GM12878 (cell line): ENCODE measurements at regions of chr9 and their contacts with region 1.

Region 1: DNA sequence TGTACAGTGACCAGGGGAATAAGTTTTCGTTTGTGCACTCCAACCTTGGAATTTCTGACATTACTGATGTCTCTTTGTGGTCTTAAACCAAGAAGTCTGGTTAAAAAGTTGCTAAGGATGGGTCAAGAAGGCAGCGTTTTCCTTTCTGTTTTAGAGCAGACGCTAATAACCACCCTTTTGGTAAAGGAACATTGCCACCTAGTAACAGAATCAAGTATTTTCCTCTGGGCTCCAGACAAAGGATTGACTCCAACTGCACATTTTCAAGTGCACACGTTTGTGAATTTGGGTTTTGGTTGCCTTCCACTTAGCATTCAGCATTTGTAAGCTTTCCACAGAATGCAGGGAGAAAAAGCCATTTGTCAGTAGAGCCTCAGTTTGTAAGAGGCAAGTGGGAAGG is 22.2 kb upstream of the CEP78 start:
- DNase-seq: no peak
- ATAC-seq: peak; percentile 70
- H3K4me3 ChIP-seq: no peak overlapping the region
- H3K27ac ChIP-seq: no peak overlapping the region
- H3K4me1 ChIP-seq: peaks cover 13% of the 10 kb centered on the region
- H3K27me3 ChIP-seq: no peaks in the 10 kb centered on the region
- CTCF ChIP-seq: peak; percentile 25 to 52 (median 40); a peak in 5 of 6 replicates
- EP300 ChIP-seq: no peak
- POLR2A ChIP-seq: no peak
- RAD21 ChIP-seq: peak; percentile 58

Region 2: GRCh38 chr9:78004478-78005229 is 209.1 kb before region 1 on chr9:
- CTCF ChIA-PET with region 1: no interaction called
- POLR2A ChIA-PET with region 1: no interaction called
- RAD21 ChIA-PET with region 1: no interaction called
- SMC1A ChIA-PET with region 1: no interaction called
- in situ Hi-C with region 1: no loop called
- intact Hi-C with region 1: loop called (anchors 10 kb)
- DNase-seq: no peak
- ATAC-seq: peak; percentile 44
- H3K4me3 ChIP-seq: no peak overlapping the region
- H3K27ac ChIP-seq: no peak overlapping the region
- H3K4me1 ChIP-seq: no peaks in the 10 kb centered on the region
- H3K27me3 ChIP-seq: no peaks in the 10 kb centered on the region; a peak in 2 of 4 replicates
- CTCF ChIP-seq: peak; percentile 3 to 25 (median 6); a peak in 3 of 6 replicates
- EP300 ChIP-seq: no peak
- POLR2A ChIP-seq: no peak
- RAD21 ChIP-seq: no peak

Region 3: DNA sequence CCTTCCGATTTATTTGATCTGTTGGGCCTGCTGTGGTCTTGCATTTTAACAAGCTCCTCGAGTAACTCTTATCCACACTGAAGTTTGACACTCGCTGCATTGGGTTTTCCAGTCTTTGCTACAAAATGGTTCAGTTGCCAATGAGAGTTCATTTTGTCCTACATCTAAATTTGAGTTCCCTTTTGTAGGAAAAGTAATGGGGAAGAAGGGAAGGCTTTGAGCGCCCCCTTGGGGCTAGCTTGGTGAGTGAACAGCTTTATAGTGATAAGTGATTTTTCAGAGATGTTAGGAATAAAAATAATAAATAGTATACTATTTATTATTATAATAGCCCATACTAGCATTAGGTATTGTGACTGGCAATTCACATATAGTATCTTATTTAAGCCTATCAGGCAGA is 92.2 kb before region 1 on chr9:
- CTCF ChIA-PET with region 1: interaction called, 5 read pairs
- POLR2A ChIA-PET with region 1: no interaction called
- RAD21 ChIA-PET with region 1: interaction called, 4 read pairs
- SMC1A ChIA-PET with region 1: interaction called, 12 read pairs
- in situ Hi-C with region 1: no loop called
- intact Hi-C with region 1: loop called (anchors 5 kb)
- DNase-seq: no peak
- ATAC-seq: peak; percentile 22; the same call in 1 of the 3 replicates
- H3K4me3 ChIP-seq: no peak overlapping the region
- H3K27ac ChIP-seq: no peak overlapping the region
- H3K4me1 ChIP-seq: peaks cover 7% of the 10 kb centered on the region; the same call in 1 of the 2 replicates
- H3K27me3 ChIP-seq: no peaks in the 10 kb centered on the region
- CTCF ChIP-seq: peak; percentile 49 to 57 (median 53)
- EP300 ChIP-seq: no peak
- POLR2A ChIP-seq: no peak
- RAD21 ChIP-seq: peak; percentile 70

Region 4: DNA sequence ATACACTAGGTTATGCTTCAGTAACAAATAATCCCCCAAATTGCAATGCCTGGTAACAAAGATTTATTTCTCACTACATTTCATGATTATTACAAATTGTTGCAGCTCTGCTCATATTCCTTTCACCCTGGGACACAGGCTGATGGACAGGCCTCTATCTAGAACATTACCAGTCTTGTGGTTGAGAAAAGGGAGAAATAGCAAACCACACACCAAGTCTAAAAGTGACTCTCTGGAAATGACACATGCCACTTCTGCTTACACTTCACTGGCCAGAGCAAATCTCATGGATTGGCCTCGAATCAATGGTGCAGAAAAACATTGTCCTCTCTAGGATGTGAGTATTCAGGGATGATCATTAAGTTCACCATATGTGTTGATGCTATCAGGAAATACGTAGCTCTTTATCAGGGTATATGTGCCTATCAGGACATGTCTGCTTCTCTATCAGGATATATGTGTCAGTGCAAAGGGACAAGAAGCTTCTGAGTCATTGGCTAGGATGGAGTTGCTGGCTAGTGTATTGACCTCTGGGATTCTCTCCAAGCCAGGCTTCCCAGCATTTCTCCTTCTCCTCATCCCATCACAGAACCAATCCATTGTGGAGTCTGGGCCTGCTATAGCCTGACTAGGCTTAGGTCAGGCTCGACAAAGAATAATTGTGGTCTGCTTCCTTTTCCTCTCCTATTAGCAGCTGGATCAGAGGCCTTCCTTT is 68.9 kb before region 1 on chr9:
- CTCF ChIA-PET with region 1: interaction called, 5 read pairs
- POLR2A ChIA-PET with region 1: no interaction called
- RAD21 ChIA-PET with region 1: interaction called, 4 read pairs
- SMC1A ChIA-PET with region 1: interaction called, 5 read pairs
- in situ Hi-C with region 1: no loop called
- intact Hi-C with region 1: loop called (anchors 5 kb)
- DNase-seq: no peak
- ATAC-seq: peak; percentile 78
- H3K4me3 ChIP-seq: no peak overlapping the region
- H3K27ac ChIP-seq: no peak overlapping the region
- H3K4me1 ChIP-seq: peaks cover 7% of the 10 kb centered on the region
- H3K27me3 ChIP-seq: no peaks in the 10 kb centered on the region
- CTCF ChIP-seq: no peak
- EP300 ChIP-seq: no peak
- POLR2A ChIP-seq: no peak
- RAD21 ChIP-seq: no peak